Gastrocnemius medialis (tissue), 4 donors: ENCODE measurements at regions of chr11 and their contacts with region 1.

Region 1: GRCh38 chr11:45102810-45103621 is 43.4 kb upstream of the PRDM11 start:
- DNase-seq: peak in 1 of 2 donors; percentile 40
- ATAC-seq: peak; percentile 61 to 71
- H3K4me3 ChIP-seq: no peak overlapping the region
- H3K27ac ChIP-seq: no peak overlapping the region
- H3K4me1 ChIP-seq: peaks cover 0 to 4% of the 10 kb centered on the region in 2 donors
- H3K27me3 ChIP-seq: peaks cover 0 to 8% (median 0%) of the 10 kb centered on the region in 3 donors
- CTCF ChIP-seq: peak; percentile 91 to 98 (median 94)
- POLR2A ChIP-seq: no peak

Region 2: GRCh38 chr11:44621140-44621681 is 481.8 kb before region 1 on chr11:
- in situ Hi-C with region 1: no loop called
- intact Hi-C with region 1: loop called (anchors 5 kb)
- DNase-seq: peak in 1 of 2 donors; percentile 49
- ATAC-seq: peak; percentile 41 to 63
- H3K4me3 ChIP-seq: no peak overlapping the region
- H3K27ac ChIP-seq: no peak overlapping the region
- H3K4me1 ChIP-seq: peaks cover 8 to 9% of the 10 kb centered on the region in 2 donors
- H3K27me3 ChIP-seq: no peaks in the 10 kb centered on the region
- CTCF ChIP-seq: peak; percentile 92 to 97 (median 95)
- POLR2A ChIP-seq: no peak

Region 3: DNA sequence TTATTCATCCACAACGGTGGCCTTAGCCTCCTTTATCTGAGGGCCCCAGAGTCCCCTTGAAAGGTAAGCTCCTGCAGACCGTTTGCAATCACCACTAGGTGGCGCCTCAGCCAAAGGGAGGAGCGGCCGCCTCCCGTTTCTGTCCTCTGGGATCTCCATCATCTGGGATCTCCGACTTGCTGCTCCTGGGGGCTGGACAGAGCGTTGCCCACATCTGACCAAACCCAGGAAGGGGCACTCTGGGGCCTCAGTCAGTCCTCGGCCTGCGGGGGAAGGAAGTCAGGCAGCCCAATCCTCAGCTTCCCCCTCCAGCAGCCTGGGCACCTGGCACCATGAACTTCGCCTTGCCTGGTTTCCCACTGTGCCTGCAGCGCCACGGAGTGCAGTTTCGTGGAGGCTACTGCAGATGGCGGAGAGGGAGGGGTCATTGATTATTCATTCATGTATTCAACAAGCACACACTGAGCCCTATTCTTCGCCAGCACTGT is 175.8 kb before region 1 on chr11:
- in situ Hi-C with region 1: no loop called
- intact Hi-C with region 1: loop called (anchors 1 kb)
- DNase-seq: peak; percentile 21 to 35
- ATAC-seq: peak; percentile 53 to 71
- H3K4me3 ChIP-seq: no peak overlapping the region
- H3K27ac ChIP-seq: no peak overlapping the region
- H3K4me1 ChIP-seq: peaks cover 0 to 10% of the 10 kb centered on the region in 2 donors
- H3K27me3 ChIP-seq: no peaks in the 10 kb centered on the region
- CTCF ChIP-seq: peak; percentile 61 to 90 (median 76)
- POLR2A ChIP-seq: no peak

Region 4: GRCh38 chr11:44936525-44936924 is 166.5 kb before region 1 on chr11:
- in situ Hi-C with region 1: loop called (anchors 5 kb)
- intact Hi-C with region 1: loop called (anchors 1 kb)
- DNase-seq: peak; percentile 39 to 70
- ATAC-seq: peak; percentile 77 to 81
- H3K4me3 ChIP-seq: no peak overlapping the region
- H3K27ac ChIP-seq: no peak overlapping the region
- H3K4me1 ChIP-seq: peaks cover 0 to 8% of the 10 kb centered on the region in 2 donors
- H3K27me3 ChIP-seq: no peaks in the 10 kb centered on the region
- CTCF ChIP-seq: peak; percentile 88 to 98 (median 95)
- POLR2A ChIP-seq: no peak

Region 5: GRCh38 chr11:44950625-44951476 is 152.2 kb before region 1 on chr11 and contains the start of gene TP53I11:
- in situ Hi-C with region 1: no loop called
- intact Hi-C with region 1: loop called (anchors 5 kb)
- DNase-seq: peak; percentile 37 to 67
- ATAC-seq: peak; percentile 54 to 66
- H3K4me3 ChIP-seq: peak within 1 kb of the TSS; percentile 55 to 85 (median 76)
- H3K27ac ChIP-seq: peak within 1 kb of the TSS; percentile 72 to 82 (median 78)
- H3K4me1 ChIP-seq: peaks cover 8 to 17% of the 10 kb centered on the region in 2 donors
- H3K27me3 ChIP-seq: no peaks in the 10 kb centered on the region
- CTCF ChIP-seq: peak; percentile 26 to 74 (median 68)
- POLR2A ChIP-seq: peak; percentile 63 to 81
- total RNA-seq, gene TP53I11: 5.4 to 17.2 (median 12.8) TPM

Region 6: DNA sequence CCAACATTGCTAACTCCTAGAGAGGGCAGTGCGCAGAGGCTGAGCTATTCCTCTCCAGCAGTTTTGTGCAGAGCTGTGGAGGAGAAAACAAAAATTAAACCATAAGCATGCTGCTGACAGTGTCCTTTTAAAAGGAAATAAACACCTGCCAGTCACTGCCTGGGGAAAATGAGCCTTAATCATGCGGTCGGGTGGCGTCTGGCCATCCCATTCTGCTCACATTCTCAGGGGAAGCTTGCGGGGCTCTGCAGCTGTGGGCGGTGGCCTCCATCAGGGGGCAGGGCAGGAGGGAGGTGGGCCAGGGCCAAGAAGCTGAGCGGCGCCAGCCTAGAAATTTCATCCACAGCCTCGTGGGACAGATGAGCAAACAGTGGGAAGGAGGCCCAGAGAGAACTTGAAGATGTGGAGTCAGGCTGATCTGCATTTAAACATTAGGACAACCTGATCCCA is 81.3 kb before region 1 on chr11:
- in situ Hi-C with region 1: no loop called
- intact Hi-C with region 1: loop called (anchors 5 kb)
- DNase-seq: peak; percentile 89 to 94
- ATAC-seq: peak; percentile 84 to 89
- H3K4me3 ChIP-seq: no peak overlapping the region
- H3K27ac ChIP-seq: peak overlapping the region; percentile 70 to 91 (median 80)
- H3K4me1 ChIP-seq: peaks cover 26 to 29% of the 10 kb centered on the region in 2 donors
- H3K27me3 ChIP-seq: no peaks in the 10 kb centered on the region
- CTCF ChIP-seq: peak in 1 of 5 experiments; percentile 20
- POLR2A ChIP-seq: no peak

Region 7: GRCh38 chr11:45298718-45299117 is 195.7 kb after region 1 on chr11:
- in situ Hi-C with region 1: loop called in 1 of 4 experiments (anchors 10 kb)
- intact Hi-C with region 1: no loop called
- DNase-seq: no peak
- ATAC-seq: no peak
- H3K4me3 ChIP-seq: no peak overlapping the region
- H3K27ac ChIP-seq: no peak overlapping the region
- H3K4me1 ChIP-seq: no peaks in the 10 kb centered on the region
- H3K27me3 ChIP-seq: no peaks in the 10 kb centered on the region
- CTCF ChIP-seq: no peak
- POLR2A ChIP-seq: no peak